ENCODE measurements at regions of chr6 and their contacts with region 1.

Region 1: DNA sequence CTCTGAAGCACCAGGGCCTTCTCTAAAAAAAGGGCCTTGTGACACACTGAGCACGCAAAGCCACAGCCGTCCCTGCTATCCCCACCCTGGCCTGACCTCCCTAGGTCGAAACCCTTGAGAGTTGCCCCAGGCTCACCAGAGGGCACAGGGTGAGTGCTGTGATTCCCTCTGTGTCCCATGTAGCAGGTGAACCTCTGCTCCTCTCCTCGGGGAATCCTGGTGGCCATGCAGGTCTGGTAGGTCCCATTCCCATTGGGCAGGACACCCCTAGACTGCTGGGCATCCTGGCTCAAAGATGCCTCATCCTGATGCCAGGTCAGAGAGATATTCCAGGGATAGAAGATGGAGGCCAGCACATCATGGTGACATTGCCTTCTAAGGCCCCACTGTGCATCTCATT is 20.9 kb downstream of the HLA-F start:
- H3K4me3 ChIP-seq: no peak overlapping the region
- H3K27ac ChIP-seq: no peak overlapping the region
- H3K4me1 ChIP-seq: no peaks in the 10 kb centered on the region; the same call in 1 of the 2 replicates
- CTCF ChIP-seq: no peak

Region 2: GRCh38 chr6:29376003-29376402 is 368.1 kb before region 1 on chr6:
- CTCF ChIA-PET with region 1: no interaction called
- POLR2A ChIA-PET with region 1: no interaction called
- H3K4me3 ChIP-seq: no peak overlapping the region
- H3K27ac ChIP-seq: no peak overlapping the region
- H3K4me1 ChIP-seq: no peaks in the 10 kb centered on the region
- CTCF ChIP-seq: no peak

Region 3: GRCh38 chr6:30626484-30627366 is 882.6 kb after region 1 on chr6 and contains the start of gene ATAT1:
- CTCF ChIA-PET with region 1: no interaction called
- POLR2A ChIA-PET with region 1: interaction called, 10 read pairs
- H3K4me3 ChIP-seq: peak within 1 kb of the TSS; percentile 77
- H3K27ac ChIP-seq: peak within 1 kb of the TSS; percentile 76
- H3K4me1 ChIP-seq: no peaks in the 10 kb centered on the region; the same call in 1 of the 2 replicates
- CTCF ChIP-seq: peak; percentile 89

Measured in HEK293 (cell line).